Dorsolateral prefrontal cortex (tissue), 120 donors: ENCODE measurements at regions of chr14 and their contacts with region 1.

Region 1: GRCh38 chr14:56117765-56118610 is at the start of gene PELI2:
- DNase-seq: peak; percentile 50 to 85 (median 70)
- H3K4me3 ChIP-seq: peak within 1 kb of the TSS; percentile 57 to 95 (median 81)
- H3K27ac ChIP-seq: peak within 1 kb of the TSS; percentile 51 to 96 (median 89)
- H3K27me3 ChIP-seq: no peaks in the 10 kb centered on the region
- CTCF ChIP-seq: peak in 12 of 56 donors; percentile 0 to 33 (median 9)
- total RNA-seq, gene PELI2: 5.2 to 31.3 (median 14.5) TPM

Region 2: GRCh38 chr14:55874785-55875184 is 243.2 kb before region 1 on chr14:
- intact Hi-C with region 1: loop called in 1 of 2 experiments (anchors 10 kb)
- DNase-seq: peak in 1 of 10 donors; percentile 23
- H3K4me3 ChIP-seq: peak overlapping the region in 51 of 59 donors; percentile 7 to 60 (median 38)
- H3K27ac ChIP-seq: no peak overlapping the region
- H3K27me3 ChIP-seq: no peaks in the 10 kb centered on the region
- CTCF ChIP-seq: peak in 31 of 56 donors; percentile 13 to 58 (median 30)

Region 3: GRCh38 chr14:55976219-55976618 is 141.8 kb before region 1 on chr14:
- intact Hi-C with region 1: loop called (anchors 5 kb)
- DNase-seq: no peak
- H3K4me3 ChIP-seq: no peak overlapping the region
- H3K27ac ChIP-seq: no peak overlapping the region
- H3K27me3 ChIP-seq: no peaks in the 10 kb centered on the region
- CTCF ChIP-seq: no peak

Region 4: DNA sequence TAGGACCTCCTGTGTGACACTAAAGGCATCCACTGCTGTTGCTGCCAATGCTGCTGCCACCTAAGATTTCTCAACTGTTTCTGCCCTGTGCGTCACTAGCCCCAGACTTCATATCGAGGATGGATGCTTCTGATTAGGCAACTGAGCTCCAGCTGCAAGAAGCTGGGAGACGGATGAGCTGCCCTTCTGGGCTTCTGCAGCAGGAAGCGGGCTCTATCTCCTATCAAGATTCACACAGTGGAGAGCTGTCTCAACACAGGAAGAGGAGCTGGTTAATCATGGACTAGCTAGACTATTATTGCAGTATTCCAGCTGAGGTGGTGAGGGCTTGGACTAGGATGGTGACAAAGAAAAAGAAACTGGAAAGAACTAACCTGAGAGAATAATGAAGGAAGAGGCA is 58.9 kb before region 1 on chr14:
- intact Hi-C with region 1: loop called in 1 of 2 experiments (anchors 2 kb)
- DNase-seq: no peak
- H3K4me3 ChIP-seq: peak overlapping the region in 3 of 59 donors; percentile 4 to 14 (median 6)
- H3K27ac ChIP-seq: no peak overlapping the region
- H3K27me3 ChIP-seq: no peaks in the 10 kb centered on the region
- CTCF ChIP-seq: no peak

Region 5: GRCh38 chr14:56216626-56217379 is 98.8 kb after region 1 on chr14:
- intact Hi-C with region 1: loop called in 1 of 2 experiments (anchors 5 kb)
- DNase-seq: peak in 7 of 10 donors; percentile 42 to 84 (median 57)
- H3K4me3 ChIP-seq: peak overlapping the region in 1 of 59 donors; percentile 9
- H3K27ac ChIP-seq: peak overlapping the region in 27 of 59 donors; percentile 3 to 67 (median 28)
- H3K27me3 ChIP-seq: no peaks in the 10 kb centered on the region
- CTCF ChIP-seq: no peak

Region 6: DNA sequence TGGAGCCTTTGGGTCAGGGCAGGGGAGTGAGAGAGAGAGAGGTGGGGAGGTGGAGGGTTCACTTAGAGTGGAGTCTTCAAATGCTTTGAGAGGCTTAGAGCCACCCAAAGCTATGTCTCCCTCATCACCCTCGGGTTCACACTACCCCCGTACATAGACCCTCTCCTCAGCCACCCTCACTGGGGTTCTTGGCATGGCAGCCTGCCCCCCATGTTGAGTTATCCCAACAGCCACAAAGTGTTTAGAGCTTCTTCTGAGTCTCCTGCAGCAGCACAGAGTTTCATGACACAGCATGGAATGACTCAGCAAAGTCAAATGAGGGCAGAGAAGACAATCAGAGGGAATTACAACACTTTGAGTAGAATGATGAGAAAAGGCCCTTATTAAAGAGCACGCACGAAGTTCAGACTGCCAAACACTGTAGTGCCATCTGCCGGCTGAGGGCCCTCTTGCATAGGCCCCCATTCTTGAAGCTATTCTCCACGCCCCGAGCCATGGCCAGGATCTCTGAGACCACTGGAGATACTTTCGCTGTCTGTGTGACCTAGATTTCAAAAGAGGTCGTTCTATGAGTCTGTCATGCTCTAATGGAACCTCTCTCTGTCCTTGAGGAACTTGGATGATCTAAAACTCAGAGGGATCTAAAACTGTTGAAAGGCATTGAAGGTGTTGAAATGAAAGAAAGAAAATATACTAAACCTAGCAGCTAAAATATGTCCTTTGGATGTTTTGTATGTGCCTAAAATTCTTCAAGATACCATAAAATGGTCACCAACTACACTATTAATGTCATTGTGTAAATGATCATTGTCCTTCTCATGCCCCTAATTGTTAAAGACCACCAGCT is 222.1 kb after region 1 on chr14:
- intact Hi-C with region 1: loop called (anchors 5 to 10 kb)
- DNase-seq: peak; percentile 66 to 87 (median 74)
- H3K4me3 ChIP-seq: no peak overlapping the region
- H3K27ac ChIP-seq: peak overlapping the region in 1 of 59 donors; percentile 20
- H3K27me3 ChIP-seq: no peaks in the 10 kb centered on the region
- CTCF ChIP-seq: peak; percentile 72 to 98 (median 90)

Region 7: GRCh38 chr14:56491299-56492285 is 373.6 kb after region 1 on chr14:
- intact Hi-C with region 1: no loop called
- DNase-seq: peak in 4 of 10 donors; percentile 11 to 54 (median 38)
- H3K4me3 ChIP-seq: peak overlapping the region in 9 of 59 donors; percentile 2 to 34 (median 19)
- H3K27ac ChIP-seq: no peak overlapping the region
- H3K27me3 ChIP-seq: no peaks in the 10 kb centered on the region
- CTCF ChIP-seq: peak; percentile 33 to 83 (median 75)